Posterior cingulate gyrus (tissue), 11 donors: ENCODE measurements at regions of chr3 and their contacts with region 1.

Region 1: DNA sequence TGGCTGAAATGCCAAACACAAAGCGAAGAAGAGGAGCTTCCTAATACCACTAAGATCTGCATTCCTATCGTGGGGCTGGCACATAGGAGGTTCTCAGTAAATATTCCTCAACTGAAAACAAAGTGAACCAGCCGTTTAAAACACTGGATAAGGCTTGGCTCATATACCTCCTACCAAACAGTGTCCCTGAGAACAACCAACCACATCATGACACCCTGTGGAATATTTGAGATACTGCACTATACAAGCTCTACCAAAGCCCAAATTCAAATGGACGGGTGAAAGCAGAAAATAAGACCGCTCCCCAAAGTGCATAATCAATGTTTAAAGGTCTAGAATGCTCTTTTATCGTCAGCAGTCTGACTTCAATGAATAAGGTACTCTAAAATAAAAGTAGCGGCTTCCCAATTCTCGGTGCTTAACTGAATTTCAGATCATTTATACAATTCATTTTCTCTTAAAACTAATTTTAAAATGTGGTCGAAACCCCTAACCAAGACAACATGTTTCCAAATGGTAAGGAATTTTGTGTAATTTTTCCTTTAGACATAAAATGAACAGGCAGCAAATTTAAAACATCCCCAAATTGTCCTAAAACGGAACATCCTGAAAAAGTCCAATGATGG is 425.8 kb downstream of the ERC2 start:
- DNase-seq: no peak

Region 2: DNA sequence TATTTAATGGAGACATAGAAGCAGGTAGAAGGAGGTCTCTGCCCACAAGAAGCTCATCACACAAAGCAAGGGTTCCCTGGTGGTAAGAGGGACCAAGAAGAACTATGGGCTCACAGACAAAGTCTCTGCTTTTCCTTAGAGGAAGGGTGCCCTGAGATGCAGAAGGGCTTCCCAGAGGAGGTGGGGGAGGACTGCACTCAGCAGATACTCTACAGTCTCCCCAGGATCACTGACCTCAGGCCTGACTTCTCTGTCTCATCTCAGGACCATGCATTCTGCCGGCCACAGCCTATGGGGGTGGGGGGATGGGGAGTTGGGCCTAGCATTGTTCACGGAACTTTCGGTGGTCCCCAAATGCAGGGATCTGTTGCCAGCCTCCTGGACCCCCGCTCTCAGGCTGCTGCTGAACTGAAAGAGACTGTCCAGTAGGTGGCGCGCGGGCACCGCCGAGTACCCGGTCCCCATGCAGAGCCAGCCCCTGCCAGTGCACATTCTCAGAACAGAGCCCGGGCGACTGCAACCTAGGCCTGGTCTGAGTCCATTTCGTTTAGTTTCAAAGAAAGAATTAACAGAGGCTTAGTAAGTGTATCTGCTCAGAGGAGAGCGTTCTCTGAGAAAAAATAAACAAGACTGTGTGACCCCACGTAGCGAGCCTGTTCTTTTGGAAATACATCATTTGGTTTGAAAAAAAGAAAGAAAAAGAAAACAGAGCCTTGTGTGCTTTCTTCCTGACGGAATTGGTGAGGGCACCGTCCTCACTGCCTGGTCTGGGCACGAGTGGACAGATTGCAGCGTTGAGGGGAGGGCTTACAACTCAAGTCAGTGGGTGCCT is 1188.7 kb before region 1 on chr3:
- intact Hi-C with region 1: loop called (anchors 5 kb)
- DNase-seq: peak; percentile 77 to 98 (median 89)

Region 3: GRCh38 chr3:55160241-55160983 is 882.0 kb before region 1 on chr3:
- intact Hi-C with region 1: no loop called
- DNase-seq: no peak

Region 4: GRCh38 chr3:55607844-55608243 is 434.6 kb before region 1 on chr3:
- intact Hi-C with region 1: no loop called
- DNase-seq: no peak

Region 5: GRCh38 chr3:55818485-55818884 is 224.0 kb before region 1 on chr3:
- intact Hi-C with region 1: loop called (anchors 5 kb)
- DNase-seq: peak in 6 of 10 donors; percentile 11 to 87 (median 42)

Region 6: GRCh38 chr3:56251343-56251945 is 209.0 kb after region 1 on chr3:
- intact Hi-C with region 1: loop called (anchors 5 kb)
- DNase-seq: peak in 3 of 10 donors; percentile 18 to 37 (median 20)